ENCODE measurements at regions of chr11 and their contacts with region 1.

Region 1: DNA sequence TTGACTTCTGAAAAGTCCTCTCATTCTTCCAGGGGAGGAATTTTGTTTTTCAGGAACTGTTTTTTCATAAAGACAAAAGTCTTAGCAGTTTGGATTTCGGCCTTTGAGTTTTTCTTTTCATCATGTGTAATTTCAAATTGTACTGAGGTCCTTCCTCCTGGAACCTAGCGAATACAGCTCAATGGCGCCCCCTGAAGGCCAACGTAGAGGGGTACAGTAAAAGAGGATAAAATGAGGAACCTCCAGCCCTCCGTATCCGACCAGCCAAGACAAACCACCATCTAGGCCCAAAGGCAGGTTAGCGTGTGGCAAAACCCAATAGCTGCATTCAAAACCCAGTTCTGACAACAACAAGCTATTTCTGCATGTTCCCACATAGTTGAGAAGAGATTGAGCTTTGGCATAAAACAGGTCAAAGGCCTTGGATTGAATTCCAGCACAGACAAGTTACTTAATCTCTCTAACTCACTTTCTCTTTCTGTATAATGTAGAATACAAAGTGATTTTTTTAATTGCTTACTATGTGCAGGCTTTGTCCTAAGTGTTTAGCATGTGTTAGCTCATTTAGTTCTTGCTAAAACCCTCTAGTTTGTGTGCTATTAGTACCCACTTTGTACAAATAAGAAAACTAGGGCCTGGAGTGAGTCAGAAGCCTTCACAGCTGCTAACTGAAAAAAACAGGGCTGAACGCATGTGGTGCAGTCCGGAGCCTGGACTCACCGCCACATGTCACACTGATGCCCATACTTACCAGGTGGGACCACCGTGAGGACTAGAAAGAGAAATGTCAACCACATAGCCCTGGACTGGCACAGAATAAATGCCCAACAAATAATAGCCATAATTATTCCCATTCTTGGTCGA is 43.2 kb upstream of the ETS1 start:
- DNase-seq: peak; percentile 92
- ATAC-seq: peak; percentile 94
- H3K4me3 ChIP-seq: no peak overlapping the region; the same call in 1 of the 2 replicates
- H3K27ac ChIP-seq: no peak overlapping the region
- H3K4me1 ChIP-seq: peaks cover 17% of the 10 kb centered on the region
- H3K27me3 ChIP-seq: no peaks in the 10 kb centered on the region
- CTCF ChIP-seq: peak; percentile 98

Region 2: GRCh38 chr11:128135451-128135850 is 495.1 kb before region 1 on chr11:
- CTCF ChIA-PET with region 1: no interaction called
- POLR2A ChIA-PET with region 1: no interaction called
- intact Hi-C with region 1: no loop called
- DNase-seq: peak; percentile 61
- ATAC-seq: no peak
- H3K4me3 ChIP-seq: no peak overlapping the region
- H3K27ac ChIP-seq: no peak overlapping the region
- H3K4me1 ChIP-seq: no peaks in the 10 kb centered on the region
- H3K27me3 ChIP-seq: peaks cover 11% of the 10 kb centered on the region; the same call in 1 of the 2 replicates
- CTCF ChIP-seq: no peak

Region 3: GRCh38 chr11:128157423-128158298 is 472.9 kb before region 1 on chr11:
- CTCF ChIA-PET with region 1: interaction called, 9 read pairs
- POLR2A ChIA-PET with region 1: no interaction called
- intact Hi-C with region 1: loop called (anchors 1 kb)
- DNase-seq: peak; percentile 93
- ATAC-seq: peak; percentile 65
- H3K4me3 ChIP-seq: peak overlapping the region; percentile 46; the same call in 1 of the 2 replicates
- H3K27ac ChIP-seq: no peak overlapping the region
- H3K4me1 ChIP-seq: peaks cover 32% of the 10 kb centered on the region
- H3K27me3 ChIP-seq: no peaks in the 10 kb centered on the region
- CTCF ChIP-seq: peak; percentile 99

Region 4: DNA sequence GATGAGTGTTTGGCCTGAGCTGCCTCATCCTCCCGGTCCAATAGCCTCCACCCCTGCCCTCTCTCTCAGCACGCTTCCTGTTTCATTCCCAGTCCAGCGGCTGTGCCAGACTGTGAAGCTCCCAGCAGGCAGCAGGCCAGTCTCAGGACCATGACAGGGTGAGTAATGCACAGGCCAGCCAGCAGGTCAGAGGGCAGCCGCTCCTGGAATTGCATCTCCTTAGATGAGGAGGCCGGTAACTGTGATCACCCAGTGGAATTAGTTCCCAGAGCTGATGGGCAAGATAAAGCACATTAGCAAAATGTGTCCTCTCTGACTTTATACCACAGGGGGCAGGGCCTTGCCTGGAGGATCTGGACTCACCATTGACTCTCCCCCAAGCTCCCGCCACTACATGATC is 294.4 kb before region 1 on chr11:
- CTCF ChIA-PET with region 1: interaction called, 4 read pairs
- POLR2A ChIA-PET with region 1: no interaction called
- intact Hi-C with region 1: loop called (anchors 1 kb)
- DNase-seq: peak; percentile 98
- ATAC-seq: peak; percentile 52
- H3K4me3 ChIP-seq: no peak overlapping the region
- H3K27ac ChIP-seq: peak overlapping the region; percentile 96
- H3K4me1 ChIP-seq: peaks cover 51% of the 10 kb centered on the region
- H3K27me3 ChIP-seq: no peaks in the 10 kb centered on the region
- CTCF ChIP-seq: no peak

Region 5: GRCh38 chr11:128552783-128553661 is 77.6 kb before region 1 on chr11:
- CTCF ChIA-PET with region 1: interaction called, 6 read pairs
- POLR2A ChIA-PET with region 1: no interaction called
- intact Hi-C with region 1: loop called (anchors 1 kb)
- DNase-seq: no peak
- ATAC-seq: no peak
- H3K4me3 ChIP-seq: no peak overlapping the region
- H3K27ac ChIP-seq: no peak overlapping the region
- H3K4me1 ChIP-seq: no peaks in the 10 kb centered on the region
- H3K27me3 ChIP-seq: no peaks in the 10 kb centered on the region
- CTCF ChIP-seq: no peak

Region 6: GRCh38 chr11:128678024-128678423 is 47.4 kb after region 1 on chr11:
- CTCF ChIA-PET with region 1: no interaction called
- POLR2A ChIA-PET with region 1: no interaction called
- intact Hi-C with region 1: no loop called
- DNase-seq: no peak
- ATAC-seq: peak; percentile 40; the same call in 1 of the 2 replicates
- H3K4me3 ChIP-seq: no peak overlapping the region
- H3K27ac ChIP-seq: no peak overlapping the region
- H3K4me1 ChIP-seq: no peaks in the 10 kb centered on the region
- H3K27me3 ChIP-seq: peaks cover 10% of the 10 kb centered on the region; the same call in 1 of the 2 replicates
- CTCF ChIP-seq: no peak

Measured in PC-3 (cell line).